ENCODE measurements at regions of chr15 and their contacts with region 1.

Region 1: GRCh38 chr15:81400640-81401236 is 26.7 kb upstream of the TMC3 start:
- DNase-seq: peak; percentile 61
- ATAC-seq: peak; percentile 73; the same call in 1 of the 2 replicates
- H3K4me3 ChIP-seq: no peak overlapping the region
- H3K27ac ChIP-seq: no peak overlapping the region
- H3K4me1 ChIP-seq: no peaks in the 10 kb centered on the region
- H3K27me3 ChIP-seq: no peaks in the 10 kb centered on the region
- CTCF ChIP-seq: peak; percentile 79

Region 2: DNA sequence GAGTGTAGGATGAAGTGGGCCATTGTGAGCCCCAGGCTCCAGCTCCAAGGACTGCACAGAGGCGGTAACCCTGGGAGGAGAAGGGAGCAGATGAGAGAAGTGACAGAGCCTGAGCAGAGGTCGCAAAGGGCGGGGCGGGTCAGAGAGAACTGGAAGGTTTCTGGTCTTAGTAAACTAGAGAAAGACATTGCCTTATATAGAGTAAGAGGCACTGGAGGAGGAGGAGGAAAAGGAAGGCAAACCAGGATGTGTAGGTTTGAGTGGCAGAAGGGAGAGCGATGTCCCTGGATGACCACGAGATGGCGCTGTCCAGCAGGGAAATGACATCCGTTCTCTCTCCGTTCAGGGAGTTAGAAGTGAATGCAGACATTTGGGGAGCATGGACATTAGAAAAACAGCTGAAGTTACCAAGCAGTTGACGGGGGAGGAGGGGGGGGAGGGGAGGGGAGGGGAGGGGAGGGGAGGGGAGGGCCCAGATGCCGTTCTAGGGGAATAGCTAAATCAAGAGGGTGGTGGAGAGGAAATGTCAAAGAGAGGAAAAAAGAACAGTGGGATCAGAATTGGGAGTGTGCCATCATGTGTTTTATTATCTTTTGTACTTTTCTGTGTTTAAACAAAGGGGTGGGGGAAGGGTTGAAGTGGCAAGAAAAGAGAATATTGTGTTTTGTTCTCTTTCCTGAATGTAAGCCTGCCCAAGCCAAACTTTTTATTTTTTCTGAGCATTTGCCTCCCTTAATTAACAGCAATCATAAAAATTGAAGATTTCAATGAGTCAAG is 125.6 kb before region 1 on chr15:
- CTCF ChIA-PET with region 1: interaction called, 4 read pairs
- POLR2A ChIA-PET with region 1: no interaction called
- in situ Hi-C with region 1: no loop called
- intact Hi-C with region 1: loop called (anchors 1 kb)
- DNase-seq: peak; percentile 55
- ATAC-seq: peak; percentile 93
- H3K4me3 ChIP-seq: no peak overlapping the region
- H3K27ac ChIP-seq: no peak overlapping the region
- H3K4me1 ChIP-seq: no peaks in the 10 kb centered on the region
- H3K27me3 ChIP-seq: no peaks in the 10 kb centered on the region; the same call in 1 of the 2 replicates
- CTCF ChIP-seq: peak; percentile 77